T-cell (primary cell): ENCODE measurements at regions of chr18 and their contacts with region 1.

Region 1: GRCh38 chr18:36809590-36810381 is 19.0 kb downstream of the TPGS2 start:
- DNase-seq: peak in 27 of 35 experiments; percentile 1 to 76 (median 14)
- ATAC-seq: peak; percentile 81 to 87 (median 84)
- H3K4me3 ChIP-seq: no peak overlapping the region
- H3K4me3 Mint-ChIP-seq: no peak overlapping the region
- H3K27ac ChIP-seq: no peak overlapping the region
- H3K27ac Mint-ChIP-seq: no peak overlapping the region
- H3K4me1 ChIP-seq: peaks cover 0 to 2% of the 10 kb centered on the region in 2 experiments
- H3K4me1 Mint-ChIP-seq: peaks cover 0 to 9% (median 6%) of the 10 kb centered on the region in 3 donors
- H3K27me3 ChIP-seq: no peaks in the 10 kb centered on the region
- H3K27me3 Mint-ChIP-seq: no peaks in the 10 kb centered on the region

Region 2: GRCh38 chr18:36688020-36688965 is 121.5 kb before region 1 on chr18:
- CTCF ChIA-PET with region 1: interaction called, 3 to 14 read pairs
- POLR2A ChIA-PET with region 1: no interaction called
- DNase-seq: peak in 24 of 35 experiments; percentile 3 to 46 (median 14)
- ATAC-seq: no peak
- H3K4me3 ChIP-seq: no peak overlapping the region
- H3K4me3 Mint-ChIP-seq: no peak overlapping the region
- H3K27ac ChIP-seq: no peak overlapping the region
- H3K27ac Mint-ChIP-seq: no peak overlapping the region
- H3K4me1 ChIP-seq: no peaks in the 10 kb centered on the region
- H3K4me1 Mint-ChIP-seq: no peaks in the 10 kb centered on the region
- H3K27me3 ChIP-seq: peaks cover 0 to 9% of the 10 kb centered on the region in 2 experiments
- H3K27me3 Mint-ChIP-seq: peaks cover 8 to 13% of the 10 kb centered on the region in 2 donors

Region 3: GRCh38 chr18:37019157-37019827 is 209.5 kb after region 1 on chr18:
- CTCF ChIA-PET with region 1: no interaction called
- POLR2A ChIA-PET with region 1: no interaction called
- DNase-seq: no peak
- ATAC-seq: no peak
- H3K4me3 ChIP-seq: no peak overlapping the region
- H3K4me3 Mint-ChIP-seq: no peak overlapping the region
- H3K27ac ChIP-seq: no peak overlapping the region
- H3K27ac Mint-ChIP-seq: no peak overlapping the region
- H3K4me1 ChIP-seq: no peaks in the 10 kb centered on the region
- H3K4me1 Mint-ChIP-seq: no peaks in the 10 kb centered on the region
- H3K27me3 ChIP-seq: no peaks in the 10 kb centered on the region
- H3K27me3 Mint-ChIP-seq: no peaks in the 10 kb centered on the region